ENCODE measurements at regions of chr6 and their contacts with region 1.

Region 1: GRCh38 chr6:125114248-125114858 is 39.2 kb upstream of the TPD52L1 start:
- DNase-seq: peak; percentile 82
- H3K4me3 Mint-ChIP-seq: no peak overlapping the region
- H3K27ac Mint-ChIP-seq: no peak overlapping the region
- H3K4me1 Mint-ChIP-seq: no peaks in the 10 kb centered on the region
- H3K27me3 Mint-ChIP-seq: peaks cover 5% of the 10 kb centered on the region

Region 2: GRCh38 chr6:123733180-123733956 is 1381.0 kb before region 1 on chr6:
- intact Hi-C with region 1: no loop called
- DNase-seq: no peak
- H3K4me3 Mint-ChIP-seq: no peak overlapping the region
- H3K27ac Mint-ChIP-seq: no peak overlapping the region
- H3K4me1 Mint-ChIP-seq: no peaks in the 10 kb centered on the region
- H3K27me3 Mint-ChIP-seq: no peaks in the 10 kb centered on the region

Region 3: DNA sequence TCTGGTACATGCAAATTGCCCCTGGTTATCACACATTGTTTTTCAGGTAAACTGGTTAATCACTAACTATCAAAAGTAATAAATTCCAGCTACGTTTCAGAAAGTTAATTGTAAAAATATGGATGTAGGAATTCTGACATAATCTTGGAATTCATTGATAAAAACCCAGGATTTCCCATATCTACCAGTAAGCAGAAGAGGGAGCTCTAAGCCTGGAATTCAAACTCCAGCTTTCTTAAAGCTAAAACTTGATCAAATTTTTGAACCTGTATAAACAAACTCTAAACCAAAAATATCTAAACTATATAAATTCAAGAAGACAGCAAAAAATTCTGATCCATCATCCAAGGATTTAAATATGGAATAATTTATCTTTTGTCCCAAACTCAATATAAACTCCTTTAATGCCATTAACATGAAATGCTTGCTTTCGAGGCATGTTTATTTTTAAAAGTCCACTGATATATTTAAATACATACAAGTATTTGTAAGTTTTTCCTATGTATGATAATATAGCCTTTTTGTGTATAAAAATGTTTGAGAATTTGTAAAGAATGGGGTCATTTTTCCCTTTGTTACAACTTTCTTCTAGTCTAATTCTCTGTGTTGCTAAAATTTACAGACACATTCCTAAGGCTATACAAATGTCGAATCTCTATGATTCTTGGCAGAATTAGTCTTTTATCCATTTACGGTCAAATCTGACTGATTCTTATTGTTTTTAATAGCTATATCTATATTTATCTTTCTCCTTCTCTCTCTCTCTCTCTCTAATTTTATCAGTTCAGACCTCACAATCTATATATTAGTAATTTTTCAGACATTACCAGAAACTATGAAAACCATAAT is 243.5 kb before region 1 on chr6:
- intact Hi-C with region 1: loop called (anchors 1 kb)
- DNase-seq: no peak
- H3K4me3 Mint-ChIP-seq: no peak overlapping the region
- H3K27ac Mint-ChIP-seq: no peak overlapping the region
- H3K4me1 Mint-ChIP-seq: no peaks in the 10 kb centered on the region
- H3K27me3 Mint-ChIP-seq: peaks cover 13% of the 10 kb centered on the region

Region 4: GRCh38 chr6:124961777-124962611 is 152.4 kb before region 1 on chr6 and contains the start of gene RNF217:
- intact Hi-C with region 1: loop called (anchors 10 kb)
- DNase-seq: peak; percentile 67
- H3K4me3 Mint-ChIP-seq: peak within 1 kb of the TSS; percentile 83
- H3K27ac Mint-ChIP-seq: peak within 1 kb of the TSS; percentile 73
- H3K4me1 Mint-ChIP-seq: peaks cover 14% of the 10 kb centered on the region
- H3K27me3 Mint-ChIP-seq: peaks cover 54% of the 10 kb centered on the region
- total RNA-seq, gene RNF217: 0.72 and 1.2 TPM in 2 replicates

Region 5: DNA sequence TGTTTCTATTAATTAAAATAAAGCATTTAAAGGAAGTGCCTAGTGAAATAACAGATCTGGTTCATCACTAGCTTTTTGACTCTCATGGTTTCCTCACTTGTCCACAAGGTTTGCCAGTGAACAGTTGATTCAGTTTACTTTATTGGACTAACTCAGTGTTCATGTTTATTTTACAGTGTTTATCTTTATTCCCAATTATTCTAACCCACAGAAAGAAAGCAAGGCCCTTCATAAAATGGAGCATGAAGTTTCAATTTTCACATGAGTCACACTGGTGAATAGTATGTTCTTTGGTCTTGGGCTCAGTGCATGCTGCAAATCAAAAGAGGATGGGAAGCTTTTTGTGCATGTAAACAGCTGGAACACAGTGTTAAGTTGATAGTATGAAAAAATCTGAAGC is 405.0 kb after region 1 on chr6:
- intact Hi-C with region 1: no loop called
- DNase-seq: no peak
- H3K4me3 Mint-ChIP-seq: no peak overlapping the region
- H3K27ac Mint-ChIP-seq: no peak overlapping the region
- H3K4me1 Mint-ChIP-seq: no peaks in the 10 kb centered on the region
- H3K27me3 Mint-ChIP-seq: peaks cover 12% of the 10 kb centered on the region

Measured in activated CD4-positive, alpha-beta T cell treated with anti-CD3 and anti-CD28 coated beads, Interleukin-2, amount 10 ng/mL, durations not matched to agents 24 days and 14 days (primary cell).